ENCODE measurements at regions of chr7 and their contacts with region 1.

Region 1: GRCh38 chr7:47301105-47301477 is 280.8 kb downstream of the TNS3 start:
- DNase-seq: peak in 1 of 2 experiments; percentile 62
- H3K4me3 ChIP-seq: no peak overlapping the region
- H3K27ac ChIP-seq: no peak overlapping the region
- H3K4me1 ChIP-seq: peaks cover 0 to 8% (median 2%) of the 10 kb centered on the region in 4 experiments; a peak in 3 of 7 replicates
- H3K27me3 ChIP-seq: no peaks in the 10 kb centered on the region
- CTCF ChIP-seq: peak; percentile 61 to 75 (median 68)
- EP300 ChIP-seq: no peak
- POLR2A ChIP-seq: no peak
- RAD21 ChIP-seq: peak; percentile 84 to 86

Region 2: GRCh38 chr7:47273088-47273487 is 28.0 kb before region 1 on chr7:
- CTCF ChIA-PET with region 1: no interaction called
- POLR2A ChIA-PET with region 1: no interaction called
- DNase-seq: no peak
- H3K4me3 ChIP-seq: no peak overlapping the region
- H3K27ac ChIP-seq: no peak overlapping the region
- H3K4me1 ChIP-seq: no peaks in the 10 kb centered on the region
- H3K27me3 ChIP-seq: no peaks in the 10 kb centered on the region; a peak in 1 of 7 replicates
- CTCF ChIP-seq: no peak
- EP300 ChIP-seq: no peak
- POLR2A ChIP-seq: no peak
- RAD21 ChIP-seq: no peak

Region 3: DNA sequence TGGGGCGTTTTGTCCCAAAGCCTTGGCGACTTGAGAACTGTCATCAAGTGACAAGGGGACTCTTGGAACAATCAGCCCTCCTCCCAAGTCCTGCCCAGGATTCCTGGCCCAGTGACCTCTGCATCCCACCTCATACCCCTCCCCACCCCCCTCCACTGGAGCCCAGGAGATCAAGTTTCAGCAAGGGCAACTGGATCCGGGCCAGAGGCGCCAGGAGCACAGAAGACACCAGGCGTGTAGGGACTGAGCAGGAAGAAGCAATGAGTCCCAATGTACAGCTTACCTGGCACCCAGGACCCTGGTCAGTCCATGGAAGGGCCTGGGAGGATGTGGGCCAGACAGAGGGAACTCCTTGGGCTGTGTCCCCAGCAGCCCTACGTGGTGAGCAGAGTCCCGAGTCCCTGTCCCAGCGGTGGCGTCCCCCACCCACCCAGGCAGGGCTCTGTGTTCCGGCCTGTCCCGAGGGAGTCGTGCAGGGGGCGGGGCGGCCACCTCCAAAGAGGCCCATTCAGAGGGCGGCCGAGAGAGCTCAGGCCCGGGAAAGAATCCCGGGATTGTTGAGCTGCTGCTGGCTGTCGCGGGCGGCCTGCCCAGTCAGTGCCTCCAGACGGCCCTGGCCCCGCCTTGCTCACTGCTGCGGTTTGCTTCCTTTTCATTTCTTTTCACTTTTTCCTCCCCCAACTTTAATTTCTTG is 26.8 kb after region 1 on chr7:
- CTCF ChIA-PET with region 1: interaction called, 26 read pairs
- POLR2A ChIA-PET with region 1: interaction called, 3 read pairs
- DNase-seq: peak; percentile 36 to 85
- H3K4me3 ChIP-seq: peak overlapping the region; percentile 20 to 57 (median 46); a peak in 7 of 8 replicates
- H3K27ac ChIP-seq: peak overlapping the region; percentile 79; the same call in 1 of the 2 replicates
- H3K4me1 ChIP-seq: peaks cover 23 to 44% (median 30%) of the 10 kb centered on the region in 4 experiments
- H3K27me3 ChIP-seq: no peaks in the 10 kb centered on the region
- CTCF ChIP-seq: no peak
- EP300 ChIP-seq: no peak
- POLR2A ChIP-seq: peak in 1 of 2 experiments; percentile 78; a peak in 2 of 3 replicates
- RAD21 ChIP-seq: peak in 1 of 2 experiments; percentile 5; a peak in 1 of 4 replicates

Region 4: GRCh38 chr7:47342296-47343060 is 41.4 kb after region 1 on chr7:
- CTCF ChIA-PET with region 1: interaction called, 12 read pairs
- POLR2A ChIA-PET with region 1: no interaction called
- DNase-seq: no peak
- H3K4me3 ChIP-seq: no peak overlapping the region
- H3K27ac ChIP-seq: no peak overlapping the region
- H3K4me1 ChIP-seq: no peaks in the 10 kb centered on the region
- H3K27me3 ChIP-seq: no peaks in the 10 kb centered on the region
- CTCF ChIP-seq: no peak
- EP300 ChIP-seq: no peak
- POLR2A ChIP-seq: no peak
- RAD21 ChIP-seq: no peak

Measured in H1 (cell line).